CD8-positive, alpha-beta memory T cell (primary cell): ENCODE measurements at regions of chr1 and their contacts with region 1.

Region 1: DNA sequence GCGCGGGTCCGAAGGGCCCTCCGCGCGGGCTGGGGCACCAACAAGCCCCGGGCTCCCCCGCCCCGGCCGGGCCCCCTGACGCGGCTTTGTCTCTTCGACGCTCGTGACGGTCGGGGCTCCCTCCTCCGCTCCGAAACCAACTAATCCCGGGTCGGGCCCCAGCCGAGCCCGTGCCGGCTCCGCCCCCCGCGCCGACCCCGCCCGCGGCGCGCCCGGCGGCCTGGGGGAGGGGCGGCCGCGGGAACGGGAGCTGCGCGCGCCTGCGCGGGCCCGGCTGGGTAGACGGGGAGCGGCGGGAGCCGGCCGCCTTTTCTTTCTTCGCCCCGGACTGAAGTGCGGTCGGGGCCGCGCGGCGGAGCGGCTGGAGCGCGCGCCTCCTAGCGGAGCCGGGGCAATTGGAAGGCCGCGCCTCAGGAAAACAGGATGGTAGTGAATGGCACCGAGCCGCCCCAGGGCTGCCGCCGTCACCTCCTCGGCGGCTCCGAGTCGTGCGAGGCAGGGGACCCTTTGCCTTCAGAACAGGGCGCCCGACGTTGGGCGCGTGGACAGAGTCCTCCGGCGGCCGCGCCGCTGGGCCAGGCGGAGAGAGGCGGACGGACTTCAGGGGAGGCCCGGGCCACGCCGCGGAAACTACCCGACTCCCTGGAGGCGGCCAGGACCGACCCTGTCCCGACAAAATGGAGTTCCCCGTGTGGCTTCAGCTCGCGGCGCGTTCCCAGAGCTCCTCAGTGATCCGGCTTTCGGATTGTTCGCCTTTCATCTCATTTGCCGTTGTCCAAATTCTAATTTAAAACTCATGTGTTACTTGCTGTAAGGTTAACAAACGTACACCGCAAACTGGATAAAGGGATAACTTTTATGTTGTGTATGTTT is at the start of gene TP53BP2:
- DNase-seq: peak; percentile 80 to 92 (median 88)
- H3K4me3 ChIP-seq: peak within 1 kb of the TSS; percentile 85
- H3K4me3 Mint-ChIP-seq: peak within 1 kb of the TSS; percentile 93 to 98 (median 94)
- H3K27ac ChIP-seq: peak within 1 kb of the TSS; percentile 89
- H3K27ac Mint-ChIP-seq: peak within 1 kb of the TSS; percentile 96 to 99 (median 98)
- H3K4me1 ChIP-seq: peaks cover 43% of the 10 kb centered on the region
- H3K4me1 Mint-ChIP-seq: peaks cover 31 to 51% (median 43%) of the 10 kb centered on the region in 3 donors
- H3K27me3 ChIP-seq: no peaks in the 10 kb centered on the region
- H3K27me3 Mint-ChIP-seq: no peaks in the 10 kb centered on the region
- total RNA-seq, gene TP53BP2: 59.5 to 59.6 TPM

Region 2: DNA sequence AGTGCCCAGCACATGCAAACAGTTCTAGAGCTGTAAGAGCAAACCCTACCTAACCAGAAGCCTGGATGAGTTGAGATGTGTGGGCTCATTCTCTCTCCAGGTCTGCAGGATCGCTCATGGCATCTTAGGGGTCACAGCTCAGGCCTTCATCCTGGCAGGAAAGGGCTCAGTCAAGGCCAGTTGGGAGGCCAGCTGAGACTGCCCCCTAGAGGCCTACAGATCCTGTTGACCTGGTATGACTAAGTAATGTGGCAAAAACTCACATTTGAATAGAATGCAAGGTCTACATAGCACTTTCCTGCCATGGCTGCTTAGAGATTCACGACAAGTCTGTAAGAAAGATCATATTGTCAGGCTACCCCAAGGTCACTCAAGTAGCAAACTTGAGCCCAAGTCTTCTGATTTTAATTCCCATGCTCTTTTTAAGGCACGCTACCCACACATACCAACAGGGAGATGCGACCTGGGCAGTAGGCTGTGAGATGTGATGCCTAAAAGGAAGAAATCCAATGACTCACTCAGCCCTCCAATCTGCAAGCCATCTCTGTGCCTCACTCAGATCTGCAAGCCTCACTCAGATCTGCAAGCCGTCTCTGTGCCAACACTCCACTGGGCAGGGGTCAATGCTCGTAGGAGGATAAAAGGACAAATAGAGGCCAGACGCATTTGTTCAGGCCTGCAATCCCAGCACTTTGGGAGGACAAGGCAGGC is 175.4 kb before region 1 on chr1:
- CTCF ChIA-PET with region 1: no interaction called
- POLR2A ChIA-PET with region 1: no interaction called
- DNase-seq: no peak
- H3K4me3 ChIP-seq: no peak overlapping the region
- H3K4me3 Mint-ChIP-seq: no peak overlapping the region
- H3K27ac ChIP-seq: no peak overlapping the region
- H3K27ac Mint-ChIP-seq: no peak overlapping the region
- H3K4me1 ChIP-seq: no peaks in the 10 kb centered on the region
- H3K4me1 Mint-ChIP-seq: no peaks in the 10 kb centered on the region
- H3K27me3 ChIP-seq: no peaks in the 10 kb centered on the region
- H3K27me3 Mint-ChIP-seq: peaks cover 5 to 15% of the 10 kb centered on the region in 2 donors

Region 3: DNA sequence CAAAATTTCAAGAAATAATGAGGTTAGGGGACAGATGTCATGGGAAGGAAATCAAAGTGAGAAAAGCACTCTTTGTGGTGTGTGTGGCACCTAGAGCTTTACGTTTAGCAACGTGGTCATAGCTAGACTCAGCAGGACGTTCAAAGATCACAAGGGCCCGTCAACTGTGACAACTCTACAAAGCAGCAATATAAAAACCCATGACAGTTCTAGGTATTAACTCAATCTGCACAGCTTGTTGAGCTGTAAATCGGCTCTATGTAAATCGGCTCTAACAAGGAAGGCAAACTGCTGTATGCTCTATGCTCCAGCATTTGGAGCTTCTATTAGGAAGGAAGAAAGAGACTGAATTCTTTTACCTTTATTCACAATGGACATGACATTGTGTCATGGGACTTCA is 65.1 kb before region 1 on chr1:
- CTCF ChIA-PET with region 1: no interaction called
- POLR2A ChIA-PET with region 1: no interaction called
- DNase-seq: no peak
- H3K4me3 ChIP-seq: no peak overlapping the region
- H3K4me3 Mint-ChIP-seq: no peak overlapping the region
- H3K27ac ChIP-seq: no peak overlapping the region
- H3K27ac Mint-ChIP-seq: peak overlapping the region in 7 of 8 donors; percentile 4 to 80 (median 46)
- H3K4me1 ChIP-seq: peaks cover 6% of the 10 kb centered on the region
- H3K4me1 Mint-ChIP-seq: peaks cover 13 to 21% (median 20%) of the 10 kb centered on the region in 3 donors
- H3K27me3 ChIP-seq: no peaks in the 10 kb centered on the region
- H3K27me3 Mint-ChIP-seq: no peaks in the 10 kb centered on the region

Region 4: GRCh38 chr1:223831755-223832636 is 14.1 kb before region 1 on chr1:
- CTCF ChIA-PET with region 1: interaction called, 6 read pairs
- POLR2A ChIA-PET with region 1: interaction called, 12 read pairs
- DNase-seq: peak in 1 of 5 donors; percentile 28
- H3K4me3 ChIP-seq: peak overlapping the region; percentile 5
- H3K4me3 Mint-ChIP-seq: peak overlapping the region; percentile 7 to 71 (median 53)
- H3K27ac ChIP-seq: peak overlapping the region; percentile 0
- H3K27ac Mint-ChIP-seq: peak overlapping the region in 5 of 8 donors; percentile 72 to 92 (median 87)
- H3K4me1 ChIP-seq: peaks cover 61% of the 10 kb centered on the region
- H3K4me1 Mint-ChIP-seq: peaks cover 14 to 23% (median 19%) of the 10 kb centered on the region in 3 donors
- H3K27me3 ChIP-seq: no peaks in the 10 kb centered on the region
- H3K27me3 Mint-ChIP-seq: no peaks in the 10 kb centered on the region

Region 5: GRCh38 chr1:223860051-223860622 is 14.1 kb after region 1 on chr1:
- CTCF ChIA-PET with region 1: no interaction called
- POLR2A ChIA-PET with region 1: no interaction called
- DNase-seq: no peak
- H3K4me3 ChIP-seq: no peak overlapping the region
- H3K4me3 Mint-ChIP-seq: no peak overlapping the region
- H3K27ac ChIP-seq: no peak overlapping the region
- H3K27ac Mint-ChIP-seq: no peak overlapping the region
- H3K4me1 ChIP-seq: no peaks in the 10 kb centered on the region
- H3K4me1 Mint-ChIP-seq: no peaks in the 10 kb centered on the region
- H3K27me3 ChIP-seq: no peaks in the 10 kb centered on the region
- H3K27me3 Mint-ChIP-seq: peaks cover 0 to 9% of the 10 kb centered on the region in 2 donors

Region 6: GRCh38 chr1:223887747-223888418 is 41.8 kb after region 1 on chr1:
- CTCF ChIA-PET with region 1: no interaction called
- POLR2A ChIA-PET with region 1: no interaction called
- DNase-seq: no peak
- H3K4me3 ChIP-seq: no peak overlapping the region
- H3K4me3 Mint-ChIP-seq: no peak overlapping the region
- H3K27ac ChIP-seq: no peak overlapping the region
- H3K27ac Mint-ChIP-seq: no peak overlapping the region
- H3K4me1 ChIP-seq: no peaks in the 10 kb centered on the region
- H3K4me1 Mint-ChIP-seq: no peaks in the 10 kb centered on the region
- H3K27me3 ChIP-seq: no peaks in the 10 kb centered on the region
- H3K27me3 Mint-ChIP-seq: no peaks in the 10 kb centered on the region